Activated T-helper 2 cell treated with anti-CD3 and anti-CD28 coated beads, Interferon-gamma antibody, Interleukin-2, Interleukin-4, amounts not matched to agents 10 μg/mL and 5 μg/mL and 100 μg/mL, durations not matched to agents 14 hours and 24 hours and 36 hours (primary cell): ENCODE measurements at regions of chr5 and their contacts with region 1.

Region 1: DNA sequence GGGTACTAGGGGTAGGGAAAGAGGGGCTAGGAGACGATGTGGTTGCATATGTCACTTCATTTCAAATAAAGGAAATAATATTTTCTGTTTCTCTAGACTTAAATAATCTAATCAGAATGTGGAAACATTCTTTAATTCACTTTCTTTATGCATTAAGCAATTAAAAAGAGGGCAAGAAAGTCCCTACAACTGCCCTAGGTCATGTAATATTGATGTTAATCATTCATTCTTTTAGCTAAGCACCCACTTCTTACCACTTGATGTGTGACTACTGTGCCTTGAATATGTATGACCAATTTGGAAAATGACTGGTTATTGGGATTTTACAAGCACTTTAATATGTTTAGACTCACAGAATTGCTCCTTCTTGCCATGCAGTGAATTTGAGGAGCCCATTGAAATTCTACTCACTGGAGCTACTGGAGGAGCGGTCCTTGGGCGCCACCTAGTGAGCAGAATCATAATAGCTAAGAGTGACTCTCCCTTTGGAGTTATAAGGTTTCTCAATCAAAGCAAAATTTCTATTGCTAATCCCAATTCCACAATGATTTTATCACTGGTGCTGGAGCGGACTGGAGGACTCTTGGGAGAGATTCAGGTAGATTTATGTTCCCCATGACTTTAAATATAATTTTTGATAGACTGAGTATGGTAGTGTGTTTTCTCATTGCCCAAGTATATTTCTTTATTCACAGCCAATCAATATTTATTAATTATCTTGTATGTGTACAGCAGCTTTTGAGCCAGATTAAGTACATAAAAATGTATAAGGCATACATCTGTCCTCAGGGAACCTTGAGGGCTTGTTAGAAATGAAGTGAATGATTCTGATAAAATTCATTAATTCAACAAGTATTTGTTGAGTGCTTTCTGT is 225.1 kb downstream of the ADGRV1 start:
- DNase-seq: peak; percentile 40
- H3K4me3 Mint-ChIP-seq: no peak overlapping the region
- H3K27ac Mint-ChIP-seq: no peak overlapping the region
- H3K4me1 Mint-ChIP-seq: no peaks in the 10 kb centered on the region
- H3K27me3 Mint-ChIP-seq: peaks cover 3% of the 10 kb centered on the region

Region 2: DNA sequence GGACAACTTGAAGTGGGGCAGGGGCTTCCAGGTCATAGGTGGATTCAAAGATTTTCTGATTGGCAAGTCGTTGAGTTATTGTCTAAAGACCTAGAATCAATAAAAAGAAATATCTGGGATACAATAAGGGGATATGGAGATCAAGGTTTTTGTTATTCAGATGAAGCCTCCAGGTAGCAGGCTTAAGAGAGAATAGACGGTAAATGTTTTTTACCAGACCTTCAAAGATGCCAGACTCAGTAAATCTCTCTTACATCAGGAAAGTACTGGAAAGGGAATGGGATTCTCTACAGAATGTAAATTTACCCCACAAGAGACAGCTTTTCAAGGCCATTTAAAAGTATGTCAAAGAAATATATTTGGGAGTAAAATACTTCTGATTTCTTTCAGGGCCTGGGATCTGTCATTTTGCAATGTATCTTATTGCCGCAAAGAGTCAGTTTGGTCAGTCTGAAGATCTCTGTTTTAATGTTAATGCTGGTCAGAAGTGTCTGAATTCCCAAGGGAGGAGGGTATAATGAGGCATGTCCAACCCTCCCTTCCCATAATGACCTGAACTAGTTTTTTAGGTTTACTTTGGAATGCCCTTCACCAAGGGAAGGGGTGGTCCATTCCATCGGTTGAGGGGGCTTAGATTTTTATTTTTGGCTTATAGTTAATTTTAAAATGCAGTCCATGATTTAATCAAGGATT is 240.7 kb before region 1 on chr5:
- intact Hi-C with region 1: no loop called
- DNase-seq: no peak
- H3K4me3 Mint-ChIP-seq: no peak overlapping the region
- H3K27ac Mint-ChIP-seq: no peak overlapping the region
- H3K4me1 Mint-ChIP-seq: no peaks in the 10 kb centered on the region
- H3K27me3 Mint-ChIP-seq: peaks cover 35% of the 10 kb centered on the region

Region 3: DNA sequence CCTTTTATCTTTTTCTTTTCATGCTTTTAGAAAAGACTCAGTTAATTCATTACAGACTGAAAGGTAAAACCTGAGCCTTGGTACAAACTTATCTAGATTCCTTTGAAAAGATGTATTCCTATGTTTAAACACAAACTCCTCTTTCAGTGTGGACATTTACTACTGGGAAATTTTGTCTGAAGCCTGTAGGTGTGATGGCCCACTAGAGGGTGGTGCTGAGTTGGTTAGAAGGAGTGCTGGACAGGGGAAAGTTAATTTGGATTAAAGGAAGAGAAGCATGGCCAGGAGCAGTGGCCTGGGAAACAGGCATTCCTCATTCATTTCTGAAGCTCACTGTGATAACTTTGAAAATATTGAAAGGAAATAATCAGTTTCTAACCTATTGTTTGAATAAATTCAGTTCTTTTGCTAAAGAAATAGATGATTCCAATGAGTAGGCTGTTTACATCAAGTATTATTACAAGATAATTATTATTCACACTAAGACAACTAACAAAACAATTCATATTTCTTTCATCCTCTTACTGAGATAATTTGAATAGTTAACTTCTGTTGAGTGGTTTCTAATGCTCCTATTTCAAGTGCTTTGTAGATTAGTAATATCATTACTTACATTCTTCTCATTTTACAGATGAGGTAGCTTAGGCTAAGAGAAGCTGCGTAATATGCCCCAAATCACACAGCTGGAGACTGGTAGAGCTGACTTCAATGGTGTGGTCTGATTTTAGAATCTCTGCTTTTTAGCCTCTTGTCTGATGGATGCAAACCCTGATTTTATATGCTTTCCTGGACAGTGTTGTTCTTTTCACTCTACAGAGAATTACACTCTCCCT is 74.2 kb before region 1 on chr5:
- intact Hi-C with region 1: loop called (anchors 1 kb)
- DNase-seq: no peak
- H3K4me3 Mint-ChIP-seq: no peak overlapping the region
- H3K27ac Mint-ChIP-seq: no peak overlapping the region
- H3K4me1 Mint-ChIP-seq: no peaks in the 10 kb centered on the region
- H3K27me3 Mint-ChIP-seq: no peaks in the 10 kb centered on the region